ENCODE measurements at regions of chr7 and their contacts with region 1.

Region 1: DNA sequence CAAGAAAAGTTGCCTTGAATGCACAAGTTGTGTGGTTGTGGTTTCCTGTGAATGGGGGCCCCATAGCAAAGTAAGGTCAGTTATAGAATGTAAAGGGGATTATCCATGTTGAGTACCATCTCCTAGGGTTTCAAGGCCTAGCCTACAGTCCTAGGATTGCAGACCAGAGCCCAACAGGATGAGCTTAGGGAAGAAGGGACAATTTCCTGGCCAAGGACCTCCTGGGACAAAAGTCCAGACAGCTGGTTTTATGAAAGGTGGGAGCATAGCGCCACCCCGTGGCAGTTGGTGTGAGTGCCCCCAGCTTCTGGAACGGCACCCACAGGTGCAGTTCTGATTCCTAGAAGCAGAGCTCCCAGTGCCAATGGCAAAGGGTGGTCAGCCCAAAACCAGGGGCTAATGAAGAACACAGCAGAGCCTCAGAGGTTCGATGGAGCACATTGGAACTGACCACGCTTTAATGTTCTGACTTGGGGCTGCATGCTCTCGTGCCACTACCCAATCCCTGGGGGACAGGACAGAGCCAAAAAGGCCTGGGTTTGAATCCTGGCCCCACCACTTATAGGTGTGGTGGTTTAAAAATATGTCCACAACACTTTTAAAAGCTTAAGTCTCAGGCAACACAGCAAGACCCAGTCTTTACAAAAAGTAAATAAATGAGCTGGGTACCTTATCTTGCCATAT is 25.8 kb upstream of the TMEM120A start:
- DNase-seq: peak; percentile 48 to 69
- ATAC-seq: peak; percentile 78 to 90
- H3K4me3 ChIP-seq: no peak overlapping the region
- H3K27ac ChIP-seq: no peak overlapping the region
- H3K4me1 ChIP-seq: peaks cover 3 to 4% of the 10 kb centered on the region in 2 donors
- H3K27me3 ChIP-seq: no peaks in the 10 kb centered on the region
- CTCF ChIP-seq: peak; percentile 80 to 95 (median 93)
- POLR2A ChIP-seq: no peak

Region 2: GRCh38 chr7:75861636-75862035 is 158.5 kb before region 1 on chr7:
- in situ Hi-C with region 1: loop called in 3 of 4 experiments (anchors 5 kb)
- intact Hi-C with region 1: loop called (anchors 1 kb)
- DNase-seq: no peak
- ATAC-seq: peak in 1 of 2 donors; percentile 56
- H3K4me3 ChIP-seq: no peak overlapping the region
- H3K27ac ChIP-seq: no peak overlapping the region
- H3K4me1 ChIP-seq: no peaks in the 10 kb centered on the region
- H3K27me3 ChIP-seq: no peaks in the 10 kb centered on the region
- CTCF ChIP-seq: no peak
- POLR2A ChIP-seq: no peak

Region 3: GRCh38 chr7:75866489-75867389 is 153.4 kb before region 1 on chr7:
- in situ Hi-C with region 1: loop called (anchors 5 kb)
- intact Hi-C with region 1: loop called (anchors 1 kb)
- DNase-seq: peak in 1 of 2 donors; percentile 43
- ATAC-seq: peak; percentile 89 to 92
- H3K4me3 ChIP-seq: no peak overlapping the region
- H3K27ac ChIP-seq: no peak overlapping the region
- H3K4me1 ChIP-seq: no peaks in the 10 kb centered on the region
- H3K27me3 ChIP-seq: no peaks in the 10 kb centered on the region
- CTCF ChIP-seq: peak; percentile 70 to 92 (median 89)
- POLR2A ChIP-seq: no peak

Region 4: DNA sequence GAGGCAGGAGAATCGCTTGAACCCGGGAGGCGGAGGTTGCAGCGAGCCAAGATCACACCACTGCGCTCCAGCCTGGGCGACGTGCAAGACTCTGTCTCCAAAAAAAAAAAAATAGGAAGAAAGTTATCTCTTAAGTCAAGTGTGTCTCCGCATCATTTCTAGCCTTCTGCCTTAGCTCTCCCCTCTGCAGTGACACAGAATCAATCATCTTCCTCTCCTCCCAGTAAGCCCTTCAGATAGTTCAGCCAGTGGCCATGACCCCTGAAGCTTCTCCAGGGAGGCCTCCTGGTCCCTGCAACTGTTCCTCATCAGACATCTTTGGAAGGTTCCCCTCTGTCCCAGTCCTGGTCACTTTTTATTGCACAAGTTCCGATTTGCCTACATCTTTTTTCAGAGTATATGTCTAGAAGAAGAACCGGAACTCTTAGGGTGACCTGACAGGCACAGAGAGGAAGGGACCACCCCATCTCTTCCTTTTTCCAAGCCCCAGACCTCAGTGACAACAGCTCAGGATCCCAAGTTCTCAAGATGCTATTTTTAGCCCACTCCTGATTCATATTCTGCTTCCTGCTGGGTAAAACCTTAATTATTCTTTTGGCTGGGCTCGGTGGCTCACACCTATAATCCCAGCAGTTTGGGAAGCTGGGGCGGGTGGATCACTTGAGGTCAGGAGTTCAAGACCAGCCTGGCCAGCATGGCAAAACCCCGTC is 147.9 kb before region 1 on chr7:
- in situ Hi-C with region 1: loop called in 3 of 4 experiments (anchors 5 kb)
- intact Hi-C with region 1: no loop called
- DNase-seq: no peak
- ATAC-seq: peak; percentile 36 to 46
- H3K4me3 ChIP-seq: no peak overlapping the region
- H3K27ac ChIP-seq: peak overlapping the region in 3 of 4 donors; percentile 44 to 68 (median 46)
- H3K4me1 ChIP-seq: no peaks in the 10 kb centered on the region
- H3K27me3 ChIP-seq: no peaks in the 10 kb centered on the region
- CTCF ChIP-seq: no peak
- POLR2A ChIP-seq: no peak

Region 5: GRCh38 chr7:76133164-76133775 is 113.1 kb after region 1 on chr7:
- in situ Hi-C with region 1: no loop called
- intact Hi-C with region 1: no loop called
- DNase-seq: no peak
- ATAC-seq: no peak
- H3K4me3 ChIP-seq: no peak overlapping the region
- H3K27ac ChIP-seq: no peak overlapping the region
- H3K4me1 ChIP-seq: no peaks in the 10 kb centered on the region
- H3K27me3 ChIP-seq: no peaks in the 10 kb centered on the region
- CTCF ChIP-seq: no peak
- POLR2A ChIP-seq: no peak

Measured in gastrocnemius medialis (tissue), 4 donors.